ENCODE measurements at regions of chr5 and their contacts with region 1.

Region 1: GRCh38 chr5:39283231-39283818 is 64.0 kb upstream of the FYB1 start:
- DNase-seq: peak; percentile 77 to 81 (median 79)
- H3K4me3 ChIP-seq: no peak overlapping the region
- H3K4me3 Mint-ChIP-seq: peak overlapping the region in 5 of 8 donors; percentile 7 to 70 (median 10)
- H3K27ac ChIP-seq: no peak overlapping the region
- H3K27ac Mint-ChIP-seq: peak overlapping the region; percentile 16 to 96 (median 58)
- H3K4me1 ChIP-seq: peaks cover 13% of the 10 kb centered on the region
- H3K4me1 Mint-ChIP-seq: peaks cover 11 to 43% (median 28%) of the 10 kb centered on the region in 4 donors
- H3K27me3 ChIP-seq: no peaks in the 10 kb centered on the region
- H3K27me3 Mint-ChIP-seq: peaks cover 5 to 7% of the 10 kb centered on the region in 2 donors

Region 2: DNA sequence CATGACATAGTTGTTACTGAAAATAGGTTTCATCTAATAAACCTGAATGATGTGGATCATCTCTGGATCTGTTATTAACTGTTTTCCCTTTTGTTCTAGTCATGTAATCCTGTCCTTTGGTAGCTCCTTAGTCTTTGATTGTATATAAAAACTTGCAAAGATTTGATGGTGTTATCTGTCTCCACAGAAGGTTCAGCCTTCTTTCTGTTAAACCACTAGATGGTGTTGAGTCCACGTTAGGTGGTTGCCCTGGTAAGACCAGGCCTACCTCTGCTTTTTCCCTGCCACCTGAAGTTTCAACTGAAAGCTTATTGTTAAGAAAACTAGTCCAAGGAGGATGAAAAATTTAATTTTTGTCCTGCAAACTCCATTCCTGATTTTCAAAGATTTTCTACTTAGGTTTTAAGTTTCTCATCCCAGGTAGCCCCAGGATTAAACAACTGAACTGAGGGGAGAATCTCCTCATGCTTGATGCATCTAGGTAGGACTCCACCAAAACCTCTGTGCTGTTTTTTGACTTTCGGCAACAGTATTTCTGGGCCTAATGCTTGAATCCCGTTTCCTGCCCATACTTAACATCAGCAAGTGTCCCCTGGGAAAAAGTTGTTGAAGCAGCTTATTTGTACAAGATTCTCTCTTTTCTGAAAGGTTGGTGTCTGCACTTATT is 277.6 kb before region 1 on chr5:
- CTCF ChIA-PET with region 1: interaction called, 3 read pairs
- POLR2A ChIA-PET with region 1: no interaction called
- intact Hi-C with region 1: loop called (anchors 5 kb)
- DNase-seq: peak in 4 of 5 donors; percentile 16 to 37 (median 23)
- H3K4me3 ChIP-seq: no peak overlapping the region
- H3K4me3 Mint-ChIP-seq: peak overlapping the region in 2 of 8 donors; percentile 5 to 42
- H3K27ac ChIP-seq: no peak overlapping the region
- H3K27ac Mint-ChIP-seq: peak overlapping the region in 5 of 7 donors; percentile 31 to 84 (median 36)
- H3K4me1 ChIP-seq: peaks cover 24% of the 10 kb centered on the region
- H3K4me1 Mint-ChIP-seq: peaks cover 36 to 53% (median 48%) of the 10 kb centered on the region in 4 donors
- H3K27me3 ChIP-seq: no peaks in the 10 kb centered on the region
- H3K27me3 Mint-ChIP-seq: no peaks in the 10 kb centered on the region

Region 3: DNA sequence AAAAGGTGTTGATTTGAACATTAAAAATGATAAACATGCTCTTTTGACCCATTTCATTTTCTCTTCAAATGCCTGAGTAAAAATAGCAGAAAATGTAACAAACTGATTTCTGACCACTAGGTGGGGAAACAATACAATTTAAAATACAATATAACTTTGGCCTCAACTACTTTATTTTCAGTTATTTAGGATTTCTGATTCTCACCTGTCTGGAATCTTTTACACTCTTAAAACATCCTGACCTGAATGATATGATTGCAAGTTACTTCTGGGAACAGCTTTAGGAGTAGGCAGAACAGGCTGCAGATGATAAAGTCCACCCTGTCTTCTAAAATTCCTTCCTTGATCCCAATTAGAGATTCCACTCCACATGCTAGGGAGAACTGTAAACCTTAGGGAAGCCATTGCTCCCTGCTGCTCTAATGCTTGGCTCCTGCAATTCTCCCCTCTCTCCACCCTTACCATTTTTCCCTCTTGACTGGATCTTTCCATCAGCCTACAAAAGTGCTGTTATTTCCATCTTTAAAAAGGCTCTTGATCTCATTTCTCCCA is 134.3 kb before region 1 on chr5:
- CTCF ChIA-PET with region 1: interaction called, 36 read pairs
- POLR2A ChIA-PET with region 1: interaction called, 4 read pairs
- intact Hi-C with region 1: loop called (anchors 1 kb)
- DNase-seq: peak in 4 of 5 donors; percentile 43 to 59 (median 56)
- H3K4me3 ChIP-seq: no peak overlapping the region
- H3K4me3 Mint-ChIP-seq: peak overlapping the region in 4 of 8 donors; percentile 2 to 36 (median 27)
- H3K27ac ChIP-seq: no peak overlapping the region
- H3K27ac Mint-ChIP-seq: peak overlapping the region; percentile 62 to 94 (median 86)
- H3K4me1 ChIP-seq: peaks cover 84% of the 10 kb centered on the region
- H3K4me1 Mint-ChIP-seq: peaks cover 59 to 87% (median 71%) of the 10 kb centered on the region in 4 donors
- H3K27me3 ChIP-seq: no peaks in the 10 kb centered on the region
- H3K27me3 Mint-ChIP-seq: no peaks in the 10 kb centered on the region

Region 4: DNA sequence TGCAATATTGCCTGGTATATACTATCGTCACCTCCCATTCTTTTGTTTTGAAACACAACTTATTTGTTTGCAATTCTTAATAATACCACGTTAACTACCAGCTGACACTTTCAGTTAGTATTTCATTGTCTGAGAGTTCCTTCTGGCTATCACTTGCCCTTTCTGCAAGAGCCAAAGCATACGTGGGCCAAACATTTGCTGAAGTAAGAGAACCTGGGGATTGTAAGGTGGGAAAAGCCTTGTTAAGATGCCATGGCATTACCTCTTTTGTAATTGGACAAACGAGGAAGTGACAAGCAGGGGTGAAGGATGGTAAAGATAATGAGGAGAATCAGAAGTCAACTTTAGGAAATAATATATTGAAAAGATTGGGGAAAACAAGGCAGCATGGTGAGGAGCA is 111.7 kb before region 1 on chr5:
- CTCF ChIA-PET with region 1: interaction called, 10 read pairs
- POLR2A ChIA-PET with region 1: interaction called, 3 read pairs
- intact Hi-C with region 1: no loop called
- DNase-seq: no peak
- H3K4me3 ChIP-seq: no peak overlapping the region
- H3K4me3 Mint-ChIP-seq: peak overlapping the region; percentile 19 to 89 (median 52)
- H3K27ac ChIP-seq: no peak overlapping the region
- H3K27ac Mint-ChIP-seq: peak overlapping the region; percentile 68 to 97 (median 92)
- H3K4me1 ChIP-seq: peaks cover 100% of the 10 kb centered on the region
- H3K4me1 Mint-ChIP-seq: peaks cover 80 to 96% (median 90%) of the 10 kb centered on the region in 4 donors
- H3K27me3 ChIP-seq: no peaks in the 10 kb centered on the region
- H3K27me3 Mint-ChIP-seq: no peaks in the 10 kb centered on the region

Region 5: DNA sequence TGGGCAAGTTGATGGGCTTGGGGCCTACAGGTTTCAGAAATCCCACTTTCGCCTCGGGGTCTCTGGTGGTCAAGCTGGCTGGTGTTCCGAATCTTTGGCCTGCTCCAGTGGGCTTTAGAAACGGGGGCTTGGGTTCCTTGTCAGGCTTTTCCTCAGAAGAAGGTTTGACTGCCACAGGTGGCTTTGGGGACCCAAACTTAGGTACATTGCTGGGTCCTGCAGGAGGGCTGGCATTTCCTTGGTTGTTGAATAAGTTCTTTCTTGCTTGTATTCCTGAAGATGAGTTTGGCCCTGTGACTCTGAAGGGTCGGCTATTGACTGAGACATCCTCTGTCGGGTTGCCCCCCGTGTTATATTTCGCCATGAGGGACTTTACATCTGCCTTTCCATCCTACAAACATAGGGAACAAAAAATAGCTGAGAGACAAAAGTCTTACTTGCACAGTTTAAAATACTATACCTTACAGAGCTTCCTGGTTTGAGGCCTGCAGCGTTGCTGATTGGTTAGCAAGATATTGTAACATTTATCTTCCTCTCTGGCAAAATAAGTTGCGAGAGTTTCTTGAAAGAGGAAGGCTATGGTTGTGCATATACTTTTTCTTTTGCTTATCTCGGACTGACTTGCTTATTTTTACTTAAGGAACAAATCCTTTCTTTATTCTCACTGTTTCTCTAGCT is 80.6 kb before region 1 on chr5:
- CTCF ChIA-PET with region 1: interaction called, 39 read pairs
- POLR2A ChIA-PET with region 1: interaction called, 22 read pairs
- intact Hi-C with region 1: loop called (anchors 1 kb)
- DNase-seq: peak; percentile 59 to 70 (median 67)
- H3K4me3 ChIP-seq: peak overlapping the region; percentile 74 to 96
- H3K4me3 Mint-ChIP-seq: peak overlapping the region; percentile 94 to 100 (median 98)
- H3K27ac ChIP-seq: peak overlapping the region; percentile 84
- H3K27ac Mint-ChIP-seq: peak overlapping the region; percentile 91 to 99 (median 96)
- H3K4me1 ChIP-seq: peaks cover 44% of the 10 kb centered on the region
- H3K4me1 Mint-ChIP-seq: peaks cover 31 to 51% (median 40%) of the 10 kb centered on the region in 4 donors
- H3K27me3 ChIP-seq: no peaks in the 10 kb centered on the region
- H3K27me3 Mint-ChIP-seq: no peaks in the 10 kb centered on the region

Region 6: GRCh38 chr5:39256477-39257235 is 26.7 kb before region 1 on chr5:
- CTCF ChIA-PET with region 1: interaction called, 10 read pairs
- POLR2A ChIA-PET with region 1: no interaction called
- intact Hi-C with region 1: no loop called
- DNase-seq: peak in 1 of 5 donors; percentile 4
- H3K4me3 ChIP-seq: peak overlapping the region in 1 of 2 donors; percentile 3
- H3K4me3 Mint-ChIP-seq: peak overlapping the region; percentile 41 to 73 (median 62)
- H3K27ac ChIP-seq: no peak overlapping the region
- H3K27ac Mint-ChIP-seq: peak overlapping the region in 3 of 7 donors; percentile 46 to 80 (median 64)
- H3K4me1 ChIP-seq: peaks cover 11% of the 10 kb centered on the region
- H3K4me1 Mint-ChIP-seq: peaks cover 9 to 16% (median 13%) of the 10 kb centered on the region in 4 donors
- H3K27me3 ChIP-seq: no peaks in the 10 kb centered on the region
- H3K27me3 Mint-ChIP-seq: no peaks in the 10 kb centered on the region

Region 7: DNA sequence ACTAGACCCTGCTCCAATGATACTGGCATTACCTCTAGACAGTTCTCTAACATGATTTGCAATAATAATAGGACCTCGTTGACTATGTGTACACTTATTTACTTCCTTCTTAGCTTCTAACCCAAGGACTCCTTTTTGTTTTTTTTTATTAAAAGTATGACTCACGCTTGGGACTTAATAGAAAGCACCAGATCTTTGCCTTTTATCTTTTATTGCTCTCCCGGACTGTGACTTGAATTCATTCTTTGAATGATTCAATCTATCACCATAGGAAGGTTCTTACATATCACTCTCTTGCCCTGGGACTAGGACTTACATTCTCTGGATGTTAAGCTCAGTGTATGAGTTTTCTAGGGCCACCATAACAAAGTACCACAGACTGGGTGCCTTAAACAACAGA is 72.0 kb after region 1 on chr5:
- CTCF ChIA-PET with region 1: no interaction called
- POLR2A ChIA-PET with region 1: no interaction called
- intact Hi-C with region 1: no loop called
- DNase-seq: no peak
- H3K4me3 ChIP-seq: no peak overlapping the region
- H3K4me3 Mint-ChIP-seq: no peak overlapping the region
- H3K27ac ChIP-seq: no peak overlapping the region
- H3K27ac Mint-ChIP-seq: no peak overlapping the region
- H3K4me1 ChIP-seq: no peaks in the 10 kb centered on the region
- H3K4me1 Mint-ChIP-seq: peaks cover 0 to under 1% (median 0%) of the 10 kb centered on the region in 4 donors
- H3K27me3 ChIP-seq: no peaks in the 10 kb centered on the region
- H3K27me3 Mint-ChIP-seq: no peaks in the 10 kb centered on the region